CD14-positive monocyte (primary cell): ENCODE measurements at regions of chr4 and their contacts with region 1.

Region 1: GRCh38 chr4:173334085-173334772 is at the start of gene HMGB2:
- DNase-seq: peak; percentile 100
- H3K4me3 ChIP-seq: peak within 1 kb of the TSS; percentile 86 to 100 (median 98)
- H3K4me3 Mint-ChIP-seq: peak within 1 kb of the TSS; percentile 97 to 98
- H3K27ac ChIP-seq: peak within 1 kb of the TSS; percentile 94 to 97
- H3K27ac Mint-ChIP-seq: peak within 1 kb of the TSS; percentile 93 to 98 (median 96)
- H3K4me1 ChIP-seq: peaks cover 27 to 46% of the 10 kb centered on the region in 2 donors
- H3K4me1 Mint-ChIP-seq: peaks cover 35% of the 10 kb centered on the region
- H3K27me3 ChIP-seq: no peaks in the 10 kb centered on the region
- H3K27me3 Mint-ChIP-seq: peaks cover 0 to 4% (median 1%) of the 10 kb centered on the region in 3 donors
- CTCF ChIP-seq: no peak
- polyA plus RNA-seq, gene HMGB2: 129 to 299 (median 248) TPM

Region 2: DNA sequence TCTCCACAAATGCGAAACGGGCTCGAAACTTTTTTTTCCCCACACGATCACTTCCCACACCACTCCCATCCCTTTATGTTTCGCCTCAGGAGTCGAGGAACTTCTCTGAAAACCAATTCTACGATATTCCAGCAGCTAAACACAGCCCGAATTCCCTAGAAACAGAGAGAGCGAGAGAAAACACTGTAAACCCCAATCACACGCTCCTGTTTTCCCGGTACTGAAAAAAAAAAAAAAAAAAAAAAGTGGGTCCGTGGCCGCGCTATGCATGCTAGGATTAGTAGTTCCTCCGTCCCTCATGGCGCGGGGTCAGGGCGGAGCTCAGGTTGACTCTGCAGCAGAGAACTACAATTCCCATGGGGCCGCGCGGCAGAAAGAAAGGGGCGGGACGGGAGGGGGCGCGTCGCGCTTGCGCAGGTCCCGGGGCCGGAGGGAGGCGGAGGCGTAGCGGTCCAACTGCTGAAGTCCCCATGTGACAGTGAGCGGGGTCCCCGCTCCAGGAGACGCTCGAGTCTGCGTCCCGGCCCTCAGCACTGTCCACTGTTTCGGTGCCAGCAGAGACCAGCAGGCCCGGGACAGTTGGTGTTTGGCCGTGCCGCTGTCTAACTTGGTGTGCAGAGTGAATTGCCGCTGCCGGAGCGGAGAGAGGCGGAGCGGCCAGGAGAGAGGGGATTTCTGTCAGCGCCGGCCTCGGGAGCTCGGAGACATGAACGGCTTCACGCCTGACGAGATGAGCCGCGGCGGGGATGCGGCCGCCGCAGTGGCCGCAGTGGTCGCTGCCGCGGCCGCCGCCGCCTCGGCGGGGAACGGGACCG is 36.5 kb after region 1 on chr4 and contains the start of gene SAP30:
- intact Hi-C with region 1: loop called (anchors 1 to 2 kb)
- DNase-seq: peak; percentile 93 to 98 (median 96)
- H3K4me3 ChIP-seq: peak within 1 kb of the TSS; percentile 79 to 98 (median 93)
- H3K4me3 Mint-ChIP-seq: peak within 1 kb of the TSS; percentile 100
- H3K27ac ChIP-seq: peak within 1 kb of the TSS; percentile 73 to 86
- H3K27ac Mint-ChIP-seq: peak within 1 kb of the TSS; percentile 93 to 98 (median 97)
- H3K4me1 ChIP-seq: peaks cover 13 to 40% of the 10 kb centered on the region in 2 donors
- H3K4me1 Mint-ChIP-seq: peaks cover 30% of the 10 kb centered on the region
- H3K27me3 ChIP-seq: no peaks in the 10 kb centered on the region
- H3K27me3 Mint-ChIP-seq: peaks cover 0 to 1% (median 0%) of the 10 kb centered on the region in 3 donors
- CTCF ChIP-seq: no peak
- polyA plus RNA-seq, gene SAP30: 16.5 to 32.2 (median 21.8) TPM

Region 3: DNA sequence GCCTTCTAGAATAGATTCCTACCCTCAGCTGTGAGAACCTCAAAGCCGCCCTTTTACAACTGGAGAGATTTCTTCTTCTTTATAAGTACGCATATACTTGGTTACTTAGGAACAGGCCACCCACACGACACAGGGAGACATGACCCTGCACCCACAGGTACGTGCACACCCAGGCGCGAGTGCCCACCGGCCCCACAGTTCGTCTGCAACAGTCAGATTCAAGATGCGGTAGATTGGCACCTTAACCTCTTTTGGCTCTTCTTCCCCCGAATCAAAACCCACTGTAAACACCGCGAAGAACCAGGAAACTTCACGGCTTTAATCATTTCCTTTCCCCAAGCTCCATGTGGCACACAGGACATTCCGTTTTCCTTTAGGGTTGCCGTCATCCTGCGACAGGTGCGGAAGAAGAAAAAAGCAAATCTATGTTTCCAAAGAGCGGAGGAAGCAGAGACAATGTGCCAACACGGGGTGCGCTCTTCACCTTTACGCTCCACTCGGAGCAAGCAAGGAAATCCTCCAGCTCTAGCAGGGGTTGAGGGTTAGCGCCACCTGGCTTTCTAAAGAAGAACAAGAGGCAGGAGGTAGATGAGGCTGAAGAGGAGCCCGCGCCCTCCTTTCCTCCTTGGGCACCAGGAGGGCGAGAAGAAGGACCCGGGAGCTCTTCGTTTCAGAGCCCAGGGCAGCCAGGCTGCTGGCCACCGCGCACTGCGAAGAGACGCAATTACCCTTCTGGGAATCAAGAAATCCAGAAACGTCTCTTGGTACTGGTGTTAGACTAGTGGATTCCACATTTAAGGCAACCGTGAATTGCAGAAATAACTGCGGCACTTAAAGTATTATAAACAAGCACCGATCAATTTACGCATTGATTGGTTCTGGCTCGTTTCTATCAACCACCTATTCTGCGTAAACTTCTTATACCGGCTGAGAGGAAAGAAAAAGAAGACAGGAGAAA is 160.1 kb after region 1 on chr4:
- intact Hi-C with region 1: loop called in 1 of 2 experiments (anchors 10 kb)
- DNase-seq: peak in 2 of 3 donors; percentile 54 to 64
- H3K4me3 ChIP-seq: peak overlapping the region; percentile 17 to 74 (median 32)
- H3K4me3 Mint-ChIP-seq: peak overlapping the region; percentile 77 to 92
- H3K27ac ChIP-seq: no peak overlapping the region
- H3K27ac Mint-ChIP-seq: peak overlapping the region in 2 of 7 donors; percentile 41 to 45
- H3K4me1 ChIP-seq: peaks cover 45 to 59% of the 10 kb centered on the region in 2 donors
- H3K4me1 Mint-ChIP-seq: peaks cover 54% of the 10 kb centered on the region
- H3K27me3 ChIP-seq: peaks cover 9 to 23% of the 10 kb centered on the region in 2 donors
- H3K27me3 Mint-ChIP-seq: peaks cover 14 to 26% (median 19%) of the 10 kb centered on the region in 3 donors
- CTCF ChIP-seq: peak; percentile 85